Head of caudate nucleus (tissue), 42 donors: ENCODE measurements at regions of chr2 and their contacts with region 1.

Region 1: GRCh38 chr2:201440182-201440581 is 11.1 kb downstream of the TRAK2 start:
- DNase-seq: no peak

Region 2: GRCh38 chr2:201642579-201643215 is 202.5 kb after region 1 on chr2:
- intact Hi-C with region 1: loop called (anchors 10 kb)
- DNase-seq: peak; percentile 37 to 92 (median 84)